Aorta (tissue), 5 donors: ENCODE measurements at regions of chr9 and their contacts with region 1.

Region 1: DNA sequence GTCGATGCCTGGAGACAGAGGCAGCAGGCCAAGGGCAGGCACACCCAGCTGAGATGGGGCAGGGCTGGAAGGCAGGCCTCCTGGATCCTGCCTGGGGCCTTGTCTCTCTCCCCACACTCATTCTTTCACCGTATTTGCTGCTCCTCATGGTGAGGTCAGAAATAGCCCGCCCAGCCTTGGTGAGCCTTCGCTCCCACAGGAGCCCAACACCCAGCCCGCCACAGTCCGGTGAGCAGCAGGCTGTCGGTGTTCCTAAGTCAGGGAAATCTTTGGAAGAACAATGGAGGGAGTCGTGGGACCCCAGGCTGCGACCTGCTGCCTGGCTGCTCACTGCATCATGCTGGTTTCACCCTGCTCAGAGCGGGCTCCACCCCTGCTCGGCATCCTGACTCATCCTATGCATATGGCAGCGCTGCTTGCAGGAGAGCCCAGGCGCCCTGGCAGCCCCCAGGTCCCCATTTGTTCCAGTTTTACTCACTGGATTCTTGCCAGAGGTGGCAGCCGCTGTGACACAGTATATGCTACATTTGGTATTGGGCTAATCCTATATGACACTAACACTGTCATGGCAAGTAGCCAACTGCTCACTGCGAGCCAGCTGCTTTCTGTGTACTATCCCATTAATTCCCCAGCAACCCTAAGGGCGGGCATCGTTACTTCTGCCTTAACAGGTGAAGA is 53.2 kb upstream of the NCS1 start:
- DNase-seq: no peak
- ATAC-seq: no peak
- H3K4me3 ChIP-seq: no peak overlapping the region
- H3K27ac ChIP-seq: no peak overlapping the region
- H3K4me1 ChIP-seq: no peaks in the 10 kb centered on the region
- H3K27me3 ChIP-seq: no peaks in the 10 kb centered on the region

Region 2: DNA sequence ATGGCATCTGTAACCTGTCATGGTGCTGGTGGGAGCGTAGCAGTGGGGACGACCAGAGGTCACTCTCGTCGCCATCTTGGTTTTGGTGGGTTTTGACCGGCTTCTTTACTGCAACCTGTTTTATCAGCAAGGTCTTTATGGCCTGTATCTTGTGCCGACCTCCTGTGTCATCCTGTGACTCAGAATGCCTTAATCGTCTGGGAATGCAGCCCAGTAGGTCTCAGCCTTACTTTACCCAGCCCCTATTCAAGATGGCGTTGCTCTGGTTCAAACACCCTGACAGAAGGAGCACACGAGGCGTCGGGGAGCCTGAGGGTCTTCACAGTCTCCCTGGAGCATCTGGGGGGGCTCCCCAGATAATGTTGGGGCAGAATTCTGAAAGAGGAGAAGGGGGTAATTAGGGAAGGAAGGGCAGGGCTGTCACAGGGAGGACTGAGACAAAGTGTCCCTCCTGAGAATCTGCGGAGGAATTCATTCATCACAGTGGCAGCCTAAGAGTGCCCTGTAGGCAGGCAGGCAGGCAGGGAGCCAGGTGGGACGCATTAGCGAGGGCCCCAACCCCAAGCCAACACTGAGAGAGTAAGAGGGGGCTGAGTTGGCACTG is 31.9 kb after region 1 on chr9:
- intact Hi-C with region 1: loop called (anchors 5 kb)
- DNase-seq: no peak
- ATAC-seq: no peak
- H3K4me3 ChIP-seq: no peak overlapping the region
- H3K27ac ChIP-seq: no peak overlapping the region
- H3K4me1 ChIP-seq: no peaks in the 10 kb centered on the region
- H3K27me3 ChIP-seq: no peaks in the 10 kb centered on the region

Region 3: GRCh38 chr9:130156672-130157071 is 37.7 kb after region 1 on chr9:
- intact Hi-C with region 1: loop called (anchors 5 kb)
- DNase-seq: peak; percentile 79 to 90
- ATAC-seq: peak; percentile 72
- H3K4me3 ChIP-seq: no peak overlapping the region
- H3K27ac ChIP-seq: no peak overlapping the region
- H3K4me1 ChIP-seq: no peaks in the 10 kb centered on the region
- H3K27me3 ChIP-seq: no peaks in the 10 kb centered on the region